ENCODE measurements at regions of chr13 and their contacts with region 1.

Region 1: GRCh38 chr13:25574437-25575411 is 202.9 kb downstream of the ATP8A2 start:
- DNase-seq: peak; percentile 25 to 74
- ATAC-seq: peak; percentile 94 to 98
- H3K4me3 ChIP-seq: no peak overlapping the region
- H3K27ac ChIP-seq: no peak overlapping the region
- H3K4me1 ChIP-seq: no peaks in the 10 kb centered on the region
- CTCF ChIP-seq: peak; percentile 72
- EP300 ChIP-seq: no peak
- POLR2A ChIP-seq: no peak
- RAD21 ChIP-seq: peak; percentile 73 to 85

Region 2: DNA sequence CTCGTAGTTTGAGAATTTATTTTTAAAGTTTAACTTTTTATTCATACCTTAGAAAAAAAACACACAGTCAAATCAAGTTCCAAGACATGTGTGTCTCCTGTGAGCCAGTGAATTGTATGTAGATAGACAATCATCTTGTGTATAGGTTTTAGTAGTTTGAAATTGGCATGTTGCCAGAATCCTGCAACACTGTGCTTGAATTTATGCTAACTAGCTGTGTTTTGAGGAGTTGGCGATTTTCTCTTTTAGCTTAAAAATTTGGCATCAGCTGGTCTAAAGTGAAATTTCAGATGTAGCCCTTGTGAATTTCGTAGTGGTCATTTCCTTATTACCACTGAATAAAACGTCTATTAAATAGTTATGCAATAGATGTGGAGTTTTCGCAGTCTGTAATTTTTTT is 10.3 kb after region 1 on chr13:
- CTCF ChIA-PET with region 1: interaction called, 20 read pairs
- POLR2A ChIA-PET with region 1: no interaction called
- DNase-seq: no peak
- ATAC-seq: no peak
- H3K4me3 ChIP-seq: no peak overlapping the region
- H3K27ac ChIP-seq: no peak overlapping the region
- H3K4me1 ChIP-seq: no peaks in the 10 kb centered on the region
- CTCF ChIP-seq: no peak
- EP300 ChIP-seq: no peak
- POLR2A ChIP-seq: no peak
- RAD21 ChIP-seq: no peak

Region 3: DNA sequence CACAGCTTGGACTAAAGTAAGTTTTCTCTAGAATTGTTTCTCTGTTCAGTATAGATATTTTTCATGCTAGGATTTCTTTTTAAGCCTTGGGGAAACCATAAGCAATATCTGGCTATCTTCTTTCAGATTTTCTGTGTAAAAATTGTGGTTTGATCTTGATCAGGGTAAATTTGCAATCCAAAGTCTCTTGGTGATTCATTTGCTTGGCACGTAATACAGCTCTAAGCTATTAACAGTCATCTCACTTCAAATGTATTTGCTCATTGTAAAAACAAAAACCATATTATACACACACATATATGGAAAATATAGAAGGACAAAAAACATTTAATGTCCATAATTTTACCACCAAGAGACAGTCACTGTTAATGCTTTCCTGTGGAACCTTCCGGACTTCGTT is 286.1 kb after region 1 on chr13:
- CTCF ChIA-PET with region 1: no interaction called
- POLR2A ChIA-PET with region 1: no interaction called
- DNase-seq: no peak
- ATAC-seq: no peak
- H3K4me3 ChIP-seq: no peak overlapping the region
- H3K27ac ChIP-seq: no peak overlapping the region
- H3K4me1 ChIP-seq: no peaks in the 10 kb centered on the region
- CTCF ChIP-seq: no peak
- EP300 ChIP-seq: no peak
- POLR2A ChIP-seq: no peak
- RAD21 ChIP-seq: no peak

Region 4: GRCh38 chr13:26062844-26063444 is 488.2 kb after region 1 on chr13:
- CTCF ChIA-PET with region 1: interaction called, 39 read pairs
- POLR2A ChIA-PET with region 1: no interaction called
- DNase-seq: peak in 1 of 2 experiments; percentile 43
- ATAC-seq: peak; percentile 59 to 69; a peak in 3 of 6 replicates
- H3K4me3 ChIP-seq: no peak overlapping the region
- H3K27ac ChIP-seq: no peak overlapping the region
- H3K4me1 ChIP-seq: no peaks in the 10 kb centered on the region
- CTCF ChIP-seq: peak; percentile 51
- EP300 ChIP-seq: no peak
- POLR2A ChIP-seq: no peak
- RAD21 ChIP-seq: peak; percentile 54

Measured in A549 (cell line).